ENCODE measurements at regions of chr2 and their contacts with region 1.

Region 1: GRCh38 chr2:112481050-112481527 is 867 bp upstream of the TTL start:
- DNase-seq: peak; percentile 66 to 84 (median 82)
- ATAC-seq: peak; percentile 85
- H3K4me3 ChIP-seq: peak overlapping the region; percentile 73
- H3K4me3 Mint-ChIP-seq: peak overlapping the region; percentile 88 to 99 (median 94)
- H3K27ac ChIP-seq: peak overlapping the region; percentile 69
- H3K27ac Mint-ChIP-seq: peak overlapping the region; percentile 81 to 96 (median 92)
- H3K4me1 ChIP-seq: peaks cover 14 to 16% of the 10 kb centered on the region in 2 donors
- H3K4me1 Mint-ChIP-seq: peaks cover 17 to 34% (median 20%) of the 10 kb centered on the region in 7 donors
- H3K27me3 ChIP-seq: no peaks in the 10 kb centered on the region
- H3K27me3 Mint-ChIP-seq: peaks cover 0 to 4% (median 0%) of the 10 kb centered on the region in 5 donors

Region 2: GRCh38 chr2:111883661-111884591 is 597.2 kb before region 1 on chr2 and contains the start of gene ANAPC1:
- CTCF ChIA-PET with region 1: no interaction called
- POLR2A ChIA-PET with region 1: no interaction called
- intact Hi-C with region 1: loop called in 1 of 2 experiments (anchors 1 kb)
- DNase-seq: peak; percentile 75 to 87 (median 84)
- ATAC-seq: peak; percentile 98
- H3K4me3 ChIP-seq: peak within 1 kb of the TSS; percentile 69
- H3K4me3 Mint-ChIP-seq: peak within 1 kb of the TSS; percentile 92 to 99 (median 96)
- H3K27ac ChIP-seq: peak within 1 kb of the TSS; percentile 85
- H3K27ac Mint-ChIP-seq: peak within 1 kb of the TSS; percentile 92 to 98 (median 96)
- H3K4me1 ChIP-seq: peaks cover 0 to 10% of the 10 kb centered on the region in 2 donors
- H3K4me1 Mint-ChIP-seq: peaks cover 2 to 26% (median 13%) of the 10 kb centered on the region in 7 donors
- H3K27me3 ChIP-seq: no peaks in the 10 kb centered on the region
- H3K27me3 Mint-ChIP-seq: no peaks in the 10 kb centered on the region
- total RNA-seq, gene ANAPC1: 51.8 to 77.2 (median 62.7) TPM

Region 3: GRCh38 chr2:112187805-112188596 is 293.1 kb before region 1 on chr2:
- CTCF ChIA-PET with region 1: no interaction called
- POLR2A ChIA-PET with region 1: no interaction called
- intact Hi-C with region 1: loop called in 1 of 2 experiments (anchors 5 kb)
- DNase-seq: peak in 8 of 9 donors; percentile 69 to 95 (median 88)
- ATAC-seq: peak; percentile 90
- H3K4me3 ChIP-seq: peak overlapping the region; percentile 31
- H3K4me3 Mint-ChIP-seq: peak overlapping the region; percentile 58 to 88 (median 74)
- H3K27ac ChIP-seq: peak overlapping the region; percentile 85
- H3K27ac Mint-ChIP-seq: peak overlapping the region; percentile 92 to 100 (median 99)
- H3K4me1 ChIP-seq: peaks cover 21 to 80% of the 10 kb centered on the region in 2 donors
- H3K4me1 Mint-ChIP-seq: peaks cover 59 to 96% (median 94%) of the 10 kb centered on the region in 7 donors
- H3K27me3 ChIP-seq: no peaks in the 10 kb centered on the region
- H3K27me3 Mint-ChIP-seq: no peaks in the 10 kb centered on the region

Region 4: DNA sequence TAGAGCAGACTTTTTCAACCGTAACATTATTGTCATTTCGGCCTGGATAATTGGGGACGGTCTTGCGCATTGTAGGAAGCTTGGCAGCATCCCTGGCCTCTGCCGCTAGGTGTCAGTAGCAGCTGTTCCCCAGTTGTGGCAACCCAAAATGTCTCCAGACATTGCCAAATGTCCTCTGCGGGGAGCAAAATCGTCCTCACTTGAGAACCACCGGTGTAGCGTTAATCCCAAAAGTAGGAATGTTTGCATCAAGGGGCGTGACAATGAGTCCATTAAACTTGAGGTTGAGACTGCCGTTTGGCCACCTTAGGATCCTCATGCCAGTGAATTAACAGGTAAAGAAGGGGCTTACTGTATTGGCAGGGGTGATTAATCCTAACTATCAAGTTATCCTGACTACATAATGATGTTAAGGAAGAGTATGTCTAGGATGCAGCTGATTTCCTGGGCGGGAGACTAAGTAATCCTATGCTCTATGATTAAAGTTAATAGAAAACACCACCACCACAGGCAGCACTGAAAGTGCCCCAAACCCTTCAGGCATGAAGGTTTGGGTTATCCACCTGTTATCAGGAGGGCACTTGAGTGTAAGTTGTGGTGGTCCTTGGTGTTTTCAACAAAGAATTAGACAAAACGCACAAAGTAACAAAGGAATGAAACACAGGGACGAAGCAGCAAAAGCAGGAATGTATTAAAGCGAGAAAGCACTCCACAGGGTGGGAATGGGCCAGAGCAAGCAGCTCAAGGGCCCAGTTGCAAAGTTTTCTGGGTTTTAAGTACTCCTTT is 221.4 kb before region 1 on chr2:
- CTCF ChIA-PET with region 1: no interaction called
- POLR2A ChIA-PET with region 1: no interaction called
- intact Hi-C with region 1: loop called (anchors 1 kb)
- DNase-seq: peak; percentile 63 to 85 (median 79)
- ATAC-seq: peak; percentile 69
- H3K4me3 ChIP-seq: peak overlapping the region; percentile 36
- H3K4me3 Mint-ChIP-seq: peak overlapping the region; percentile 19 to 78 (median 70)
- H3K27ac ChIP-seq: no peak overlapping the region
- H3K27ac Mint-ChIP-seq: peak overlapping the region; percentile 16 to 91 (median 70)
- H3K4me1 ChIP-seq: peaks cover 0 to 6% of the 10 kb centered on the region in 2 donors
- H3K4me1 Mint-ChIP-seq: peaks cover 4 to 23% (median 7%) of the 10 kb centered on the region in 7 donors
- H3K27me3 ChIP-seq: no peaks in the 10 kb centered on the region
- H3K27me3 Mint-ChIP-seq: peaks cover 0 to 9% (median 5%) of the 10 kb centered on the region in 5 donors

Region 5: GRCh38 chr2:112433932-112434730 is 47.0 kb before region 1 on chr2:
- CTCF ChIA-PET with region 1: no interaction called
- POLR2A ChIA-PET with region 1: no interaction called
- intact Hi-C with region 1: loop called in 1 of 2 experiments (anchors 5 kb)
- DNase-seq: peak in 1 of 9 donors; percentile 3
- ATAC-seq: no peak
- H3K4me3 ChIP-seq: no peak overlapping the region
- H3K4me3 Mint-ChIP-seq: peak overlapping the region in 4 of 10 donors; percentile 15 to 81 (median 60)
- H3K27ac ChIP-seq: no peak overlapping the region
- H3K27ac Mint-ChIP-seq: peak overlapping the region in 4 of 9 donors; percentile 6 to 84 (median 63)
- H3K4me1 ChIP-seq: no peaks in the 10 kb centered on the region
- H3K4me1 Mint-ChIP-seq: peaks cover 7 to 30% (median 22%) of the 10 kb centered on the region in 7 donors
- H3K27me3 ChIP-seq: no peaks in the 10 kb centered on the region
- H3K27me3 Mint-ChIP-seq: peaks cover 0 to 13% (median 6%) of the 10 kb centered on the region in 5 donors

Region 6: DNA sequence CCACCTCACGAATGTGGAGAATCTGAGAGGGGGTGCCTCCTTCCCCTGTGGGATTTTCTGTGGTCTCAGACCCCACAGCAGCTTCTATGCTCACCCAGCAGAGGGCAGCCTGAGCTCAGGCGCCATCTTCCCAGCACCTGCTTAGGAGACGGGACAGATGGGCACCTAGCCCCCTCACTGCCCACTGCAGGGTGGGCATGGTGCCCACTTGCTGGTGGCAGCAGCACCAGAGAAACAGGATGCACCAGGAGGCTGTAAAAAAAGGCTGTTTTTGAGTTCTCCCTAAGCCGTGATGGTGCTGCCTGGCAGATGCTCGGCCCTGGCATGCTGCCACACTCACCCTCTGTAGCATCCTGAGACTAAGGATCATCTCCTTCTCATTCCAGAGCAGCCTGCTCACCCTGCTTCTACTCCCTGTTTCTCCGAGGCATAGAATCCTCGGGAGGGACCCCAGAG is 145.5 kb after region 1 on chr2:
- CTCF ChIA-PET with region 1: no interaction called
- POLR2A ChIA-PET with region 1: no interaction called
- intact Hi-C with region 1: loop called in 1 of 2 experiments (anchors 5 kb)
- DNase-seq: peak; percentile 47 to 81 (median 67)
- ATAC-seq: peak; percentile 70
- H3K4me3 ChIP-seq: peak overlapping the region; percentile 61
- H3K4me3 Mint-ChIP-seq: peak overlapping the region; percentile 47 to 81 (median 72)
- H3K27ac ChIP-seq: peak overlapping the region; percentile 29
- H3K27ac Mint-ChIP-seq: peak overlapping the region in 8 of 9 donors; percentile 80 to 99 (median 94)
- H3K4me1 ChIP-seq: peaks cover 49 to 64% of the 10 kb centered on the region in 2 donors
- H3K4me1 Mint-ChIP-seq: peaks cover 34 to 88% (median 55%) of the 10 kb centered on the region in 7 donors
- H3K27me3 ChIP-seq: no peaks in the 10 kb centered on the region
- H3K27me3 Mint-ChIP-seq: no peaks in the 10 kb centered on the region

Region 7: GRCh38 chr2:112692496-112692911 is 211.4 kb after region 1 on chr2:
- CTCF ChIA-PET with region 1: no interaction called
- POLR2A ChIA-PET with region 1: interaction called, 3 read pairs
- intact Hi-C with region 1: loop called in 1 of 2 experiments (anchors 5 kb)
- DNase-seq: peak in 3 of 9 donors; percentile 7 to 69 (median 16)
- ATAC-seq: peak; percentile 81
- H3K4me3 ChIP-seq: no peak overlapping the region
- H3K4me3 Mint-ChIP-seq: peak overlapping the region in 1 of 10 donors; percentile 78
- H3K27ac ChIP-seq: no peak overlapping the region
- H3K27ac Mint-ChIP-seq: peak overlapping the region in 6 of 9 donors; percentile 45 to 91 (median 56)
- H3K4me1 ChIP-seq: peaks cover 6 to 16% of the 10 kb centered on the region in 2 donors
- H3K4me1 Mint-ChIP-seq: peaks cover 0 to 38% (median 18%) of the 10 kb centered on the region in 7 donors
- H3K27me3 ChIP-seq: no peaks in the 10 kb centered on the region
- H3K27me3 Mint-ChIP-seq: no peaks in the 10 kb centered on the region

Region 8: DNA sequence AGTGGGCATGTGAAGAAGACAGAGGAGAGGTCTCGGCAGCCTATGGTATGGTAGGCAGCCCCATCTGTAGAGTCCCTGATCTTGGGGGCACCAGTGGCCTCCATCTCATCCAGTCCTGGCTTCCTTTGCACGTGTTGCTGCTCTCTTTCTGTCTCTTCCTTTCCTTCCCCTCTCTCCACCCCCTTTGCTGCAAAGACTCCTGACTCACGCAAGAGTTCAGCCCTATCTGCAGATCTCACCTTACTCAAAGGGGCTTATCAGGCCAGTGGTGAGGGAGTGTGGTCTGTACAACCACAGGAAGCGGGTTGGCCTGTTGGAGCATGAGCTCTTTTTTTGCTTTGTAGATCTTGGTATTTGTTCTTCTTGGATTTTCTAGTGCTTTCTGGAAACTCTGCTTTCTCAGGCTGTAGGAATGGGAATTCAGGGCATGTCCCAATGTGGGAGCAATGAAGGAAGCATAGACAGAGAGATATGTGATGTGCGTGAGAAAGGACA is 225.1 kb after region 1 on chr2:
- CTCF ChIA-PET with region 1: no interaction called
- POLR2A ChIA-PET with region 1: no interaction called
- intact Hi-C with region 1: no loop called
- DNase-seq: peak in 4 of 9 donors; percentile 13 to 73 (median 32)
- ATAC-seq: peak; percentile 88
- H3K4me3 ChIP-seq: no peak overlapping the region
- H3K4me3 Mint-ChIP-seq: peak overlapping the region in 4 of 10 donors; percentile 22 to 76 (median 46)
- H3K27ac ChIP-seq: no peak overlapping the region
- H3K27ac Mint-ChIP-seq: peak overlapping the region in 3 of 9 donors; percentile 10 to 78 (median 60)
- H3K4me1 ChIP-seq: peaks cover 0 to 15% of the 10 kb centered on the region in 2 donors
- H3K4me1 Mint-ChIP-seq: peaks cover 7 to 57% (median 13%) of the 10 kb centered on the region in 7 donors
- H3K27me3 ChIP-seq: no peaks in the 10 kb centered on the region
- H3K27me3 Mint-ChIP-seq: peaks cover 0 to 12% (median 8%) of the 10 kb centered on the region in 5 donors